K562 (cell line): ENCODE measurements at regions of chr2 and their contacts with region 1.

Region 1: DNA sequence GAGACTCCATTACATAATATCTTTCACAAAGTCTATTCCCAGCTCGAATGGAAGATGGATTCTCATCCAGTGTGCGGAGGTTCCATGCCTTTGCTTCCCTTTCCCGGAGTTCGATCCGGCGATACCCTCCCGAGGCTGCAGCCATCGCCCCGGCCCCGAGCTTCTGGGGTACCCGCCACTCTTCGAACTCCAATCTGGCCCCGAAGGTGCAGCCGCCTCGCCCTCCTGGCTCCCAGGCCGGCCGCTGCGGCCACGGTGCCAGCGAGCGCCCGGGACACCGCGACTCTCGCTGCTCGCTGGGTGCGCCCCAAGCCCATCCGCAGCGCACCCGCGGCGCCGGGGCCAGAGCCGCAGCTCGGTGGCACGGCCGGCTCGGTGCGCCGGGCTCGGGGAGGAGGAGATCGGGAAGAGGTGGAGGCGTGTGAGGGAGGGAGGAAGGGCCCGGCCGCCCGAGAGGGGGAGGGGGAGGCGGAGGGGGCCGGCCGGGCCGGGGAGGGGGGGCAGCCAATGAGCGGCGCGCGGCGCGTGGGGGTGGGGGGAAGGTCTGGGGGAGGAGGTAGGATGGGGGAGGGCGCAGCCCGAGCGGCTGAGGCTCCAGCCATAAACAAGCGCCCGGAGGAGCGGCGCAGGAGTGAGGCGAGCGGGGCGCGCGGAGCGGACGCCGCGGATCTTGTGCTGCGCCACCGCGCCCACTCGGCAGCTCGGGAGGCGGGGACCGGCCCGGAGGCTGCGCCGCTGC is at the start of gene CRIM1:
- DNase-seq: peak in 3 of 4 experiments; percentile 3 to 41 (median 35)
- ATAC-seq: peak; percentile 63; the same call in 2 of the 3 replicates
- H3K4me3 ChIP-seq: no peak within 1 kb of the TSS
- H3K27ac ChIP-seq: no peak within 1 kb of the TSS
- H3K4me1 ChIP-seq: peaks cover 0 to 14% of the 10 kb centered on the region in 2 experiments; a peak in 2 of 5 replicates
- H3K27me3 ChIP-seq: peaks cover 4 to 18% of the 10 kb centered on the region in 2 experiments; a peak in 3 of 5 replicates
- CTCF ChIP-seq: no peak
- EP300 ChIP-seq: no peak
- POLR2A ChIP-seq: no peak
- RAD21 ChIP-seq: no peak
- polyA plus RNA-seq, gene CRIM1: 0.04 to 0.07 TPM

Region 2: GRCh38 chr2:36461039-36461681 is 105.8 kb after region 1 on chr2:
- CTCF ChIA-PET with region 1: no interaction called
- POLR2A ChIA-PET with region 1: interaction called, 3 read pairs
- in situ Hi-C with region 1: no loop called
- intact Hi-C with region 1: loop called (anchors 5 kb)
- DNase-seq: no peak
- ATAC-seq: no peak
- H3K4me3 ChIP-seq: no peak overlapping the region
- H3K27ac ChIP-seq: no peak overlapping the region
- H3K4me1 ChIP-seq: no peaks in the 10 kb centered on the region; a peak in 1 of 5 replicates
- H3K27me3 ChIP-seq: peaks cover 0 to 12% of the 10 kb centered on the region in 2 experiments; a peak in 4 of 5 replicates
- CTCF ChIP-seq: no peak
- EP300 ChIP-seq: no peak
- POLR2A ChIP-seq: no peak
- RAD21 ChIP-seq: no peak

Region 3: DNA sequence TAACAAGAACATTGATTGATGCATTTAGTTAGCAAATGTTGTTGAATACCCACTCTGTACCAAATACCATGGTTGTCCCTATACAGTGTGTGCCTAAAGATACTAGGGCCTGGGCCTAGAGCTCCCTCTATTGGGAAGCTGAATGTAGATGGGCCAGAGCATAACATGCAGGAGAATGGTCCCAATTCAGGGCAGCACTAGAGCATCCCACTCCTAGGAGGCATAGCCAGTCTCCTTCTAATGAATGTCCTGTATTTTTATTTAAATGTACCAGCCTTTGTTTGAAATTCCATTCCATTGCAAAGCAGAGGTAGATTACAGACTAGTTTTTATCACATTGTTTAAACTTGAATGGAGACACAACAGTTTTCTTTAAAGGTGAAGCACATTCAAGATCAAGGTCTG is 152.1 kb after region 1 on chr2:
- CTCF ChIA-PET with region 1: no interaction called
- POLR2A ChIA-PET with region 1: no interaction called
- in situ Hi-C with region 1: no loop called
- intact Hi-C with region 1: loop called (anchors 2 kb)
- DNase-seq: peak; percentile 13 to 56 (median 33)
- ATAC-seq: peak; percentile 96
- H3K4me3 ChIP-seq: no peak overlapping the region
- H3K27ac ChIP-seq: no peak overlapping the region
- H3K4me1 ChIP-seq: peaks cover 0 to 9% of the 10 kb centered on the region in 2 experiments; a peak in 2 of 5 replicates
- H3K27me3 ChIP-seq: no peaks in the 10 kb centered on the region
- CTCF ChIP-seq: peak; percentile 65 to 76 (median 73)
- EP300 ChIP-seq: no peak
- POLR2A ChIP-seq: no peak
- RAD21 ChIP-seq: peak; percentile 72 to 81

Region 4: GRCh38 chr2:36663851-36664695 is 308.8 kb after region 1 on chr2:
- CTCF ChIA-PET with region 1: interaction called, 8 read pairs
- POLR2A ChIA-PET with region 1: no interaction called
- in situ Hi-C with region 1: loop called (anchors 5 kb)
- intact Hi-C with region 1: loop called (anchors 2 kb)
- DNase-seq: peak; percentile 32 to 68 (median 40)
- ATAC-seq: peak; percentile 96
- H3K4me3 ChIP-seq: no peak overlapping the region
- H3K27ac ChIP-seq: no peak overlapping the region
- H3K4me1 ChIP-seq: no peaks in the 10 kb centered on the region
- H3K27me3 ChIP-seq: peaks cover 0 to 2% of the 10 kb centered on the region in 2 experiments; a peak in 2 of 5 replicates
- CTCF ChIP-seq: peak; percentile 50 to 78 (median 66); a peak in 5 of 6 replicates
- EP300 ChIP-seq: no peak
- POLR2A ChIP-seq: no peak
- RAD21 ChIP-seq: peak; percentile 86 to 87

Region 5: GRCh38 chr2:36770542-36771287 is 415.4 kb after region 1 on chr2:
- CTCF ChIA-PET with region 1: interaction called, 7 read pairs
- POLR2A ChIA-PET with region 1: no interaction called
- in situ Hi-C with region 1: no loop called
- intact Hi-C with region 1: loop called (anchors 10 kb)
- DNase-seq: peak; percentile 77 to 81 (median 80)
- ATAC-seq: peak; percentile 99
- H3K4me3 ChIP-seq: no peak overlapping the region
- H3K27ac ChIP-seq: no peak overlapping the region
- H3K4me1 ChIP-seq: no peaks in the 10 kb centered on the region
- H3K27me3 ChIP-seq: peaks cover 12 to 20% of the 10 kb centered on the region in 2 experiments; a peak in 4 of 5 replicates
- CTCF ChIP-seq: peak; percentile 93 to 98 (median 97)
- EP300 ChIP-seq: no peak
- POLR2A ChIP-seq: no peak
- RAD21 ChIP-seq: peak; percentile 28 to 79; a peak in 2 of 4 replicates